ENCODE measurements at regions of chr1 and their contacts with region 1.

Region 1: DNA sequence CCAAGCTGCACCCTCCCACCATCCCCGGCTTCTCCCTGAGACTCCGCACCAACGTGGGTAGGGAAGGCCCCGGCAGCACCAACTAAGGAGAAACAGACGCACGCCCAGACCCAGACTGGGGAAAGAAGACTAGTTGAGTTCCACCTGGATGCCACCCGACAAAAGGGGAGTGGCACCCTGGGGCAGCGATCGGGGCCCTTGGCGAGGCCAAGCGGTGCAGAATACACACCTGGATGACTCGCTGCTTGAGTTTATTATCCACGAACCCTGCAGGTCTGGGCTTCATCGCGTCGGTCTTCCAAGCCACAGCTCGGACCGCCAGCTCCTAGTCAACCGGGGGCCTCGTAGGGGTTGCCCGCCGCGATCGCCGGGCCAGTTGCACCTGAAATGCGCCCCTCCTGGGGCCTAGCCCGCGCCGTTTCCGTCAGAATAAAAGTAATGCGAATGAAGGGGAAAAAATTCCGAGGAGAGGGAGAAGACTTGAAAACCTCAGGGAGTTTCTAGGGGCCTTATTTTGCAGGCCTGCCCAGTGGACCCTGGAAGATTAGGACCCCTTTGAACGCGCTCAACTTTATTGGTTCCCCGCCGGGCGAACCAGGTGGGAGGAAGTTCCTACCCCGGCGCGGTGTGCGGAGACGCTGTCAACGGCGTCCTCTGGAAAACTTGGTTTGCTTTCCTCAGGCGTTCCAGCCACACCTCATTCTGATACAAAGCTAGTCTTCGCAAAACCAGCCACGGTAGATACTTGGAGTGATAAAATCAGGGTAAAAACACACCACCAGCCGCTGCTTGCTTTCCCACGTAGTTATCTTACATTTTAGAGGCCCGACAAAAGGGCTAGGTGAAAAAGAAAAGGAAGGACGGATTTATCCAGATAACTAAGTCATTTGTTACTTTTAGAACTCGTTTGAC is at the start of gene NVL:
- DNase-seq: peak; percentile 66 to 91 (median 74)
- ATAC-seq: peak; percentile 92
- H3K4me3 ChIP-seq: peak within 1 kb of the TSS; percentile 70
- H3K4me3 Mint-ChIP-seq: peak within 1 kb of the TSS; percentile 90
- H3K27ac ChIP-seq: peak within 1 kb of the TSS; percentile 78 to 87
- H3K27ac Mint-ChIP-seq: peak within 1 kb of the TSS; percentile 92
- H3K4me1 ChIP-seq: peaks cover 21% of the 10 kb centered on the region
- H3K4me1 Mint-ChIP-seq: peaks cover 39% of the 10 kb centered on the region
- H3K27me3 ChIP-seq: no peaks in the 10 kb centered on the region
- H3K27me3 Mint-ChIP-seq: no peaks in the 10 kb centered on the region
- CTCF ChIP-seq: no peak
- total RNA-seq, gene NVL: 14.9 to 18.5 TPM

Region 2: DNA sequence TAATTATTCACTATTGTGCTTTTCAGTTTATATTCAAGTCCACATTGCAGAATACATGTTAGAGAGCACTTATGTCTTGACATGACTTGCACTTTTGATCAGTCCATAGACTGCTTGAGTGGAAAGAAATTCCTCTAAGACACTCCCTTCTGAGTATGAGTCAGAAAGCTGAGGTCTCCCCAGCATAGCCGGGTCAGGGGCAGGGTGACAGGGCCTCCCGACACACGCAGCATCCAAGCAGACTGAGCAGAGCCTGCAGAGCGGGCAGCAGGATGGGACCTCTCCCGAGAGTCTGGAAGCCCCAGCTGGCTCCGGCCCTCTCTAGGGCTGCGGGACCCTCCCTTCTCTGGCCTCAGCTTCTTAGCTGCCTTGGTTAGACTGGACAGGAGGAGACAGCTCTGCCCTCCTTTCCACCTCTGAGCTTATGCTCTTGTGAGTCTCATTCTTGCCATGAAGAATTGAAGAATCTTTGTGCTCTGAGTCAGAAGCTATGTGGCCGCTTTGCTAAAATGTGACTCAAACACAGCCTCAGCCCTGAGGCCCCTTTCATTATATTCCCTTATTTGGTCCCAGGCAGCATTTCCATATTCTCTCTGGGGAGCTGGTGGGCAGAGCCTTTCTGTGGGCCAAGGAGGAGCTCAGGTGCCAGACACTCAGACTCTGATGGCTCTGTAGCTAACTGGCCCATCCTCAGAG is 629.0 kb before region 1 on chr1:
- CTCF ChIA-PET with region 1: no interaction called
- POLR2A ChIA-PET with region 1: no interaction called
- intact Hi-C with region 1: loop called (anchors 2 to 5 kb)
- DNase-seq: no peak
- ATAC-seq: no peak
- H3K4me3 ChIP-seq: no peak overlapping the region
- H3K4me3 Mint-ChIP-seq: no peak overlapping the region
- H3K27ac ChIP-seq: no peak overlapping the region
- H3K27ac Mint-ChIP-seq: no peak overlapping the region
- H3K4me1 ChIP-seq: peaks cover 8% of the 10 kb centered on the region
- H3K4me1 Mint-ChIP-seq: peaks cover 8% of the 10 kb centered on the region
- H3K27me3 ChIP-seq: no peaks in the 10 kb centered on the region
- H3K27me3 Mint-ChIP-seq: no peaks in the 10 kb centered on the region
- CTCF ChIP-seq: no peak

Region 3: GRCh38 chr1:224042557-224043118 is 287.5 kb before region 1 on chr1:
- CTCF ChIA-PET with region 1: no interaction called
- POLR2A ChIA-PET with region 1: no interaction called
- intact Hi-C with region 1: no loop called
- DNase-seq: no peak
- ATAC-seq: no peak
- H3K4me3 ChIP-seq: no peak overlapping the region
- H3K4me3 Mint-ChIP-seq: no peak overlapping the region
- H3K27ac ChIP-seq: no peak overlapping the region
- H3K27ac Mint-ChIP-seq: no peak overlapping the region
- H3K4me1 ChIP-seq: no peaks in the 10 kb centered on the region
- H3K4me1 Mint-ChIP-seq: no peaks in the 10 kb centered on the region
- H3K27me3 ChIP-seq: peaks cover 4 to 5% of the 10 kb centered on the region in 2 experiments
- H3K27me3 Mint-ChIP-seq: peaks cover 32% of the 10 kb centered on the region
- CTCF ChIP-seq: no peak

Region 4: GRCh38 chr1:224113918-224114786 is 215.9 kb before region 1 on chr1 and contains the start of gene FBXO28:
- CTCF ChIA-PET with region 1: interaction called, 11 read pairs
- POLR2A ChIA-PET with region 1: interaction called, 9 read pairs
- intact Hi-C with region 1: loop called (anchors 1 kb)
- DNase-seq: peak; percentile 85 to 96 (median 92)
- ATAC-seq: peak; percentile 91
- H3K4me3 ChIP-seq: peak within 1 kb of the TSS; percentile 98
- H3K4me3 Mint-ChIP-seq: peak within 1 kb of the TSS; percentile 92
- H3K27ac ChIP-seq: peak within 1 kb of the TSS; percentile 91 to 98
- H3K27ac Mint-ChIP-seq: peak within 1 kb of the TSS; percentile 84
- H3K4me1 ChIP-seq: peaks cover 17% of the 10 kb centered on the region
- H3K4me1 Mint-ChIP-seq: peaks cover 42% of the 10 kb centered on the region
- H3K27me3 ChIP-seq: no peaks in the 10 kb centered on the region
- H3K27me3 Mint-ChIP-seq: peaks cover 6% of the 10 kb centered on the region
- CTCF ChIP-seq: no peak
- total RNA-seq, gene FBXO28: 32.5 to 37.1 TPM

Region 5: GRCh38 chr1:224182866-224183590 is 147.1 kb before region 1 on chr1 and contains the start of gene DEGS1:
- CTCF ChIA-PET with region 1: no interaction called
- POLR2A ChIA-PET with region 1: interaction called, 11 read pairs
- intact Hi-C with region 1: loop called in 1 of 2 experiments (anchors 5 kb)
- DNase-seq: peak; percentile 75 to 94 (median 80)
- ATAC-seq: peak; percentile 75
- H3K4me3 ChIP-seq: peak within 1 kb of the TSS; percentile 92
- H3K4me3 Mint-ChIP-seq: peak within 1 kb of the TSS; percentile 96
- H3K27ac ChIP-seq: peak within 1 kb of the TSS; percentile 93 to 97
- H3K27ac Mint-ChIP-seq: peak within 1 kb of the TSS; percentile 94
- H3K4me1 ChIP-seq: peaks cover 52% of the 10 kb centered on the region
- H3K4me1 Mint-ChIP-seq: peaks cover 53% of the 10 kb centered on the region
- H3K27me3 ChIP-seq: no peaks in the 10 kb centered on the region
- H3K27me3 Mint-ChIP-seq: no peaks in the 10 kb centered on the region
- CTCF ChIP-seq: no peak
- total RNA-seq, gene DEGS1: 54.0 to 59.1 TPM

Region 6: GRCh38 chr1:224245188-224245587 is 84.9 kb before region 1 on chr1:
- CTCF ChIA-PET with region 1: interaction called, 3 read pairs
- POLR2A ChIA-PET with region 1: interaction called, 10 read pairs
- intact Hi-C with region 1: no loop called
- DNase-seq: peak in 10 of 14 experiments; percentile 1 to 70 (median 10)
- ATAC-seq: peak; percentile 85
- H3K4me3 ChIP-seq: no peak overlapping the region
- H3K4me3 Mint-ChIP-seq: peak overlapping the region; percentile 70
- H3K27ac ChIP-seq: peak overlapping the region; percentile 30 to 76
- H3K27ac Mint-ChIP-seq: peak overlapping the region; percentile 93
- H3K4me1 ChIP-seq: peaks cover 14% of the 10 kb centered on the region
- H3K4me1 Mint-ChIP-seq: peaks cover 18% of the 10 kb centered on the region
- H3K27me3 ChIP-seq: no peaks in the 10 kb centered on the region
- H3K27me3 Mint-ChIP-seq: no peaks in the 10 kb centered on the region
- CTCF ChIP-seq: no peak

Region 7: GRCh38 chr1:224292419-224292818 is 37.7 kb before region 1 on chr1:
- CTCF ChIA-PET with region 1: no interaction called
- POLR2A ChIA-PET with region 1: no interaction called
- intact Hi-C with region 1: no loop called
- DNase-seq: no peak
- ATAC-seq: no peak
- H3K4me3 ChIP-seq: no peak overlapping the region
- H3K4me3 Mint-ChIP-seq: no peak overlapping the region
- H3K27ac ChIP-seq: no peak overlapping the region
- H3K27ac Mint-ChIP-seq: no peak overlapping the region
- H3K4me1 ChIP-seq: no peaks in the 10 kb centered on the region
- H3K4me1 Mint-ChIP-seq: no peaks in the 10 kb centered on the region
- H3K27me3 ChIP-seq: no peaks in the 10 kb centered on the region
- H3K27me3 Mint-ChIP-seq: no peaks in the 10 kb centered on the region
- CTCF ChIP-seq: no peak

Region 8: GRCh38 chr1:224454397-224455066 is 124.4 kb after region 1 on chr1:
- CTCF ChIA-PET with region 1: interaction called, 3 read pairs
- POLR2A ChIA-PET with region 1: interaction called, 3 read pairs
- intact Hi-C with region 1: loop called (anchors 2 kb)
- DNase-seq: no peak
- ATAC-seq: no peak
- H3K4me3 ChIP-seq: no peak overlapping the region
- H3K4me3 Mint-ChIP-seq: no peak overlapping the region
- H3K27ac ChIP-seq: no peak overlapping the region
- H3K27ac Mint-ChIP-seq: no peak overlapping the region
- H3K4me1 ChIP-seq: peaks cover 9% of the 10 kb centered on the region
- H3K4me1 Mint-ChIP-seq: peaks cover 16% of the 10 kb centered on the region
- H3K27me3 ChIP-seq: no peaks in the 10 kb centered on the region
- H3K27me3 Mint-ChIP-seq: no peaks in the 10 kb centered on the region
- CTCF ChIP-seq: no peak

Measured in CD4-positive, alpha-beta T cell (primary cell).